ENCODE measurements at regions of chr9 and their contacts with region 1.

Region 1: GRCh38 chr9:75071530-75072124 is 16.3 kb downstream of the NMRK1 start:
- DNase-seq: peak in 1 of 10 donors; percentile 83

Region 2: GRCh38 chr9:74773886-74774479 is 297.6 kb before region 1 on chr9:
- intact Hi-C with region 1: loop called (anchors 1 kb)
- DNase-seq: peak; percentile 69 to 97 (median 86)

Region 3: GRCh38 chr9:75001719-75002422 is 69.8 kb before region 1 on chr9:
- intact Hi-C with region 1: loop called (anchors 5 kb)
- DNase-seq: no peak

Region 4: DNA sequence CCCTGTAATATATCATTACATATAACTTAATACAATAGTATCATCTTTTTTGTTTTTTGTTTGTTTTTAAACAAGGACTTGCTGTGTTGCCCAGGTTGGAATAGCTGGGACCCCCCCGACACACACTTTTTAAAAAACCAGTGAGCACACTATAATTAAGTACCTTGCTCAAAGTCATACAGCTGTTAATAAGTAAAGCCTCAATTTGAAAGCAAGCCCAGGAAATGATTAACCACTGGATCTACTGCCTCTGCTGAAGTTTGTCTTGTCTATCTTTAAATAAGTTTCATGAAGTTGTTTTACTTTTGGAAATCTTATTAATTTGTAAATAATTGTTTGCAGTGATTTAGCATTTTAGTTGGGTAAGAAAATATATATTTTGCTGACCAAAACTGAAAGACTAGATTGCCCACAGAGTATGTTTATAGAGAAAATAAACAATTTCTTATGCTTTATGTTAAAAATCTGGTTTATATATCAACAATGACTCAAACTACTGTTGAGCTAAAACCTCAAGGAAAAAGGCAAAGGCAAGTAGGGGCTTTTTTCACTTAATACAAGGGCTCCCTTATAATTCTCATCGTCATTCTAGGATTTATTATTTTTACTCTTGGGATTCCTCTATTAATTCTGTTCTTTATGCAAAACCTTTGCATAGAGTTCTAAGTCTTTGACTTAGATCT is 37.7 kb before region 1 on chr9:
- intact Hi-C with region 1: loop called (anchors 5 kb)
- DNase-seq: no peak

Measured in posterior cingulate gyrus (tissue), 11 donors.